ENCODE measurements at regions of chr12 and their contacts with region 1.

Region 1: DNA sequence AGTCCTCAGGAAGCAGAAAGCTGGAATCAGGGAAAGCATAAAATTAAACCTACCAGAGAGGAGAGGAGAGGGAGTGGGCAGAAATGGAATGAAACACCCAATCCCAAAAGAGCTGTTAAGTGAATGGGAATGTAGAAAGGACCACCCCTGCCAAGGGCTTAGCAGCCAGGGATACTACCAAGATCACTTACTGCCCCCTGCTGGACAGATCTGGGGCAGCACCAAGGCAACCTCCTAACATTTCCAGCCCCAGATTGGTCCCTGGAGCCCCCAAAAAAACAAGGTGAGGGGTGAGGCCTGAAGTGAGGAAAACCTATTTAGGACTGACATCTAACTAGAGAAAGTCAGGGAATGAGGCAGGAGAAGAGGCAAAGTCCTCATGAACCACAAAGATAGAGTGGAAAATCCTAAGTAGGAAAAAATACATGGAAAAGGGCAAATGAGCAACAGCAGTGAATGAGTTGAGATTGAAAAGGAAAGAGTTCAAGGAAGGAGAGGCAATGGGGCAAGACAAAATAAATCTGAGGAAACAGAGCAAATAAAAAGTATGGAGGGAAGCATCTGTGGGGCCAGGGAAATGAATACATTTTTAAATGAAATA is 11.2 kb upstream of the FKBP11 start:
- DNase-seq: peak; percentile 72 to 94 (median 86)
- ATAC-seq: peak; percentile 67
- H3K4me3 ChIP-seq: no peak overlapping the region
- H3K4me3 Mint-ChIP-seq: no peak overlapping the region
- H3K27ac ChIP-seq: peak overlapping the region in 1 of 2 experiments; percentile 17
- H3K27ac Mint-ChIP-seq: peak overlapping the region; percentile 79
- H3K4me1 ChIP-seq: peaks cover 20% of the 10 kb centered on the region
- H3K4me1 Mint-ChIP-seq: peaks cover 30% of the 10 kb centered on the region
- H3K27me3 ChIP-seq: no peaks in the 10 kb centered on the region
- H3K27me3 Mint-ChIP-seq: no peaks in the 10 kb centered on the region
- CTCF ChIP-seq: peak; percentile 88

Region 2: GRCh38 chr12:48857278-48857994 is 79.0 kb before region 1 on chr12:
- CTCF ChIA-PET with region 1: interaction called, 115 read pairs
- POLR2A ChIA-PET with region 1: interaction called, 9 read pairs
- intact Hi-C with region 1: loop called (anchors 1 kb)
- DNase-seq: no peak
- ATAC-seq: no peak
- H3K4me3 ChIP-seq: no peak overlapping the region
- H3K4me3 Mint-ChIP-seq: no peak overlapping the region
- H3K27ac ChIP-seq: no peak overlapping the region
- H3K27ac Mint-ChIP-seq: no peak overlapping the region
- H3K4me1 ChIP-seq: peaks cover 7% of the 10 kb centered on the region
- H3K4me1 Mint-ChIP-seq: peaks cover 10% of the 10 kb centered on the region
- H3K27me3 ChIP-seq: peaks cover 3 to 7% of the 10 kb centered on the region in 2 experiments
- H3K27me3 Mint-ChIP-seq: peaks cover 18% of the 10 kb centered on the region
- CTCF ChIP-seq: no peak

Region 3: DNA sequence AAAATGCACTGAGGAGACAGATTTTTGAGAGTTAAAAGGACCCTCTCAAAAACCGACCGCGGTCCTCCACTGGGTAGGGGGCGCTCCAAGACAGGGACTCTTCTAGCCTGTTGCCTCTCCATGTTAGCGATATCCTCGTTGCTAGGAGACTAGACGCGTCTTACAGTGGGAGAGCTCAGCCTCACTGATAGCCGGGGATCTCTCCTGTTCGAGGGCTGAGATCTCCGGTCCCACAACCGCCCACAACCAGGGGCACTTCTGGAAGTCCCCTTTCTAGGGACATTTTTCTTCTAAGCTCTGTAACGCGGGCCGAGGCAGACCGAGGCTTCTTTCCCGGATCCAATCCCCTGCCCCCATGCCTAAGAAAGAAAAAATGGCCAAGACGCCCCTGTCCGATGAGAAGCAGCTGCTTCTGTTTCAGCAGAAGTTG is 32.5 kb before region 1 on chr12:
- CTCF ChIA-PET with region 1: interaction called, 84 read pairs
- POLR2A ChIA-PET with region 1: interaction called, 4 read pairs
- intact Hi-C with region 1: loop called (anchors 1 kb)
- DNase-seq: peak; percentile 68 to 93 (median 87)
- ATAC-seq: peak; percentile 99
- H3K4me3 ChIP-seq: peak overlapping the region; percentile 13 to 27
- H3K4me3 Mint-ChIP-seq: peak overlapping the region; percentile 79
- H3K27ac ChIP-seq: no peak overlapping the region
- H3K27ac Mint-ChIP-seq: no peak overlapping the region
- H3K4me1 ChIP-seq: peaks cover 4% of the 10 kb centered on the region
- H3K4me1 Mint-ChIP-seq: peaks cover 11% of the 10 kb centered on the region
- H3K27me3 ChIP-seq: no peaks in the 10 kb centered on the region
- H3K27me3 Mint-ChIP-seq: no peaks in the 10 kb centered on the region
- CTCF ChIP-seq: peak; percentile 79

Region 4: GRCh38 chr12:48917857-48918537 is 18.5 kb before region 1 on chr12:
- CTCF ChIA-PET with region 1: interaction called, 172 read pairs
- POLR2A ChIA-PET with region 1: interaction called, 32 read pairs
- intact Hi-C with region 1: loop called in 1 of 2 experiments (anchors 2 kb)
- DNase-seq: peak in 8 of 9 experiments; percentile 44 to 78 (median 60)
- ATAC-seq: peak; percentile 90
- H3K4me3 ChIP-seq: peak overlapping the region; percentile 48 to 55
- H3K4me3 Mint-ChIP-seq: peak overlapping the region; percentile 90
- H3K27ac ChIP-seq: peak overlapping the region; percentile 34 to 75
- H3K27ac Mint-ChIP-seq: peak overlapping the region; percentile 93
- H3K4me1 ChIP-seq: peaks cover 41% of the 10 kb centered on the region
- H3K4me1 Mint-ChIP-seq: peaks cover 42% of the 10 kb centered on the region
- H3K27me3 ChIP-seq: no peaks in the 10 kb centered on the region
- H3K27me3 Mint-ChIP-seq: no peaks in the 10 kb centered on the region
- CTCF ChIP-seq: no peak

Region 5: GRCh38 chr12:48957141-48958048 is 20.9 kb after region 1 on chr12 and contains the start of gene ARF3:
- CTCF ChIA-PET with region 1: interaction called, 7 read pairs
- POLR2A ChIA-PET with region 1: interaction called, 4 read pairs
- intact Hi-C with region 1: loop called in 1 of 2 experiments (anchors 2 kb)
- DNase-seq: peak; percentile 79 to 97 (median 92)
- ATAC-seq: peak; percentile 94
- H3K4me3 ChIP-seq: peak within 1 kb of the TSS; percentile 68 to 97
- H3K4me3 Mint-ChIP-seq: peak within 1 kb of the TSS; percentile 97
- H3K27ac ChIP-seq: peak within 1 kb of the TSS; percentile 50 to 71
- H3K27ac Mint-ChIP-seq: peak within 1 kb of the TSS; percentile 86
- H3K4me1 ChIP-seq: peaks cover 19% of the 10 kb centered on the region
- H3K4me1 Mint-ChIP-seq: peaks cover 42% of the 10 kb centered on the region
- H3K27me3 ChIP-seq: no peaks in the 10 kb centered on the region
- H3K27me3 Mint-ChIP-seq: peaks cover 8% of the 10 kb centered on the region
- CTCF ChIP-seq: no peak
- total RNA-seq, gene ARF3: 34.7 to 36.4 TPM

Region 6: GRCh38 chr12:48988030-48988649 is 51.7 kb after region 1 on chr12:
- CTCF ChIA-PET with region 1: interaction called, 14 read pairs
- POLR2A ChIA-PET with region 1: no interaction called
- intact Hi-C with region 1: no loop called
- DNase-seq: peak in 8 of 9 experiments; percentile 58 to 84 (median 78)
- ATAC-seq: peak; percentile 84
- H3K4me3 ChIP-seq: no peak overlapping the region
- H3K4me3 Mint-ChIP-seq: no peak overlapping the region
- H3K27ac ChIP-seq: no peak overlapping the region
- H3K27ac Mint-ChIP-seq: no peak overlapping the region
- H3K4me1 ChIP-seq: no peaks in the 10 kb centered on the region
- H3K4me1 Mint-ChIP-seq: peaks cover 5% of the 10 kb centered on the region
- H3K27me3 ChIP-seq: peaks cover 0 to 7% of the 10 kb centered on the region in 2 experiments
- H3K27me3 Mint-ChIP-seq: peaks cover 24% of the 10 kb centered on the region
- CTCF ChIP-seq: peak; percentile 81

Region 7: GRCh38 chr12:49138587-49138986 is 202.1 kb after region 1 on chr12:
- CTCF ChIA-PET with region 1: no interaction called
- POLR2A ChIA-PET with region 1: no interaction called
- intact Hi-C with region 1: no loop called
- DNase-seq: no peak
- ATAC-seq: no peak
- H3K4me3 ChIP-seq: no peak overlapping the region
- H3K4me3 Mint-ChIP-seq: no peak overlapping the region
- H3K27ac ChIP-seq: no peak overlapping the region
- H3K27ac Mint-ChIP-seq: no peak overlapping the region
- H3K4me1 ChIP-seq: no peaks in the 10 kb centered on the region
- H3K4me1 Mint-ChIP-seq: peaks cover 2% of the 10 kb centered on the region
- H3K27me3 ChIP-seq: no peaks in the 10 kb centered on the region
- H3K27me3 Mint-ChIP-seq: no peaks in the 10 kb centered on the region
- CTCF ChIP-seq: no peak